Dorsolateral prefrontal cortex (tissue), 120 donors: ENCODE measurements at regions of chr3 and their contacts with region 1.

Region 1: GRCh38 chr3:181326637-181327223 is 337.2 kb upstream of the DNAJC19 start:
- DNase-seq: peak in 1 of 10 donors; percentile 13
- H3K4me3 ChIP-seq: peak overlapping the region in 14 of 59 donors; percentile 0 to 46 (median 12)
- H3K27ac ChIP-seq: peak overlapping the region in 33 of 59 donors; percentile 2 to 79 (median 58)
- H3K27me3 ChIP-seq: no peaks in the 10 kb centered on the region
- CTCF ChIP-seq: peak; percentile 58 to 91 (median 80)

Region 2: GRCh38 chr3:181379278-181379677 is 52.5 kb after region 1 on chr3:
- intact Hi-C with region 1: loop called in 1 of 2 experiments (anchors 5 kb)
- DNase-seq: no peak
- H3K4me3 ChIP-seq: no peak overlapping the region
- H3K27ac ChIP-seq: no peak overlapping the region
- H3K27me3 ChIP-seq: no peaks in the 10 kb centered on the region
- CTCF ChIP-seq: no peak

Region 3: DNA sequence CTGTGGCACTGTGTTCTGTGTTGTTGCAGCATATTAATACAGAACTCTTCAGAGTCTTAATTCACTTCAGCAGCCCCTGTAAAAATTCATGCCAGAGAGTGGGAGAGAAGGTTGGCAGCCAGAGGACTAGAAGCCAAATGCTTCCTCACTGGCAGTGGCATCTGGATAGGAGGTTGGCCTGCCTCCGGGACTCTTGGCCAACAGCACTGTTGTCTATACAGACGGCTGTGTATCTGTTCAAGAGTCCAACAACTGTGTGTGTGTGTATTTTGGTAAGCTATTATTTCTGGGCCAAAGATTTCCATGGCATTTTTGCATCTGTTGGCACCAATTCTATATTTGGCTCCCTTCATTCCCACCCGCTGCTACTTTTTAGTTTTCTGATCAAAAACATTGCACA is 229.0 kb after region 1 on chr3:
- intact Hi-C with region 1: loop called (anchors 5 kb)
- DNase-seq: peak in 9 of 10 donors; percentile 41 to 85 (median 76)
- H3K4me3 ChIP-seq: peak overlapping the region in 2 of 59 donors; percentile 8 to 33
- H3K27ac ChIP-seq: peak overlapping the region in 41 of 59 donors; percentile 10 to 78 (median 51)
- H3K27me3 ChIP-seq: no peaks in the 10 kb centered on the region
- CTCF ChIP-seq: no peak

Region 4: DNA sequence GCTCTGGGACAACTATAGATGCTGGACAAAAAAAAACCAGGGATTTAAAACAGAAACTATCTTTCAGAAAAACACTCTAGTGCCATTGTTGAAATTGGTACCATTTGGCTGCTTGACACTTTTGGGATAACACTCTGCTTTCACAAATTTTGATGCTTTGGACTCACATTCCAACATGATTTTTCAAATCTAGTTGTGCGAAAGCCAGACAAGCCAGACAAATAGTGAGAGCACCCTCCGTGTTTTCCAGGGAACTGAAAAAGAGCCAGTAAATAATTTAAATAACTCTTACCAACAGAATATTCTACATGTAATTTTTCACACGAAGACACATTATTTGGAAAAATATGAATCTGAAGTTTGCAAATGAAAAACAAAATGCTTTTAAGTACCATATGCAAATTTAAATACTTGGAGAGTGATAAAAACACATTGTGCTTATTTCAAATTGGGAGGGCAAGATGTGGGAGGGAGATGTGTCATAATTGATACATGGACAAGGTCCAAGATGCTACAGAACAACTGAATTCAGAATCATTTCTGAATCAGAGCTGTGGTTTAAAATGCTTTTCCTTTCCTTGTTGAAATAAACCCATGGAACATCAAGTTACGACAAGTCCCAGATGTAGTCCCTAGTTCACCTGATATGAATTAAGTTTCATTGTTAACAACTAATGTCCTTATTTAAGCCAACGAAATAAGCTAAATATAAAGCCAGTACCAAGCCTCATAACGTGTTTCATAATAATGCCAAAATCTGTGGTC is 240.8 kb after region 1 on chr3:
- intact Hi-C with region 1: loop called in 1 of 2 experiments (anchors 5 kb)
- DNase-seq: no peak
- H3K4me3 ChIP-seq: peak overlapping the region in 53 of 59 donors; percentile 4 to 58 (median 36)
- H3K27ac ChIP-seq: peak overlapping the region; percentile 23 to 92 (median 82)
- H3K27me3 ChIP-seq: no peaks in the 10 kb centered on the region
- CTCF ChIP-seq: peak in 1 of 56 donors; percentile 2